Heart left ventricle (tissue), 16 donors: ENCODE measurements at regions of chr4 and their contacts with region 1.

Region 1: GRCh38 chr4:39977489-39978377 is at the start of gene PDS5A:
- DNase-seq: peak; percentile 89 to 95 (median 91)
- ATAC-seq: peak; percentile 81 to 94 (median 92)
- H3K4me3 ChIP-seq: peak within 1 kb of the TSS; percentile 69 to 100 (median 91)
- H3K27ac ChIP-seq: peak within 1 kb of the TSS; percentile 83 to 97 (median 92)
- H3K4me1 ChIP-seq: peaks cover 0 to 36% (median 15%) of the 10 kb centered on the region in 12 donors
- H3K27me3 ChIP-seq: no peaks in the 10 kb centered on the region
- CTCF ChIP-seq: peak; percentile 68 to 91 (median 87)
- POLR2A ChIP-seq: no peak
- total RNA-seq, gene PDS5A: 23.0 to 41.6 (median 30.7) TPM

Region 2: GRCh38 chr4:39458505-39459300 is 519.0 kb before region 1 on chr4 and contains the starts of genes LIAS and RPL9:
- intact Hi-C with region 1: loop called in 3 of 10 experiments (anchors 2 to 10 kb)
- DNase-seq: peak; percentile 94 to 98 (median 96)
- ATAC-seq: peak; percentile 95 to 97 (median 97)
- H3K4me3 ChIP-seq: peak within 1 kb of the TSS; percentile 67 to 93 (median 85)
- H3K27ac ChIP-seq: peak within 1 kb of the TSS; percentile 86 to 98 (median 92)
- H3K4me1 ChIP-seq: peaks cover 10 to 37% (median 27%) of the 10 kb centered on the region in 12 donors
- H3K27me3 ChIP-seq: no peaks in the 10 kb centered on the region
- CTCF ChIP-seq: no peak
- POLR2A ChIP-seq: peak; percentile 87 to 95
- total RNA-seq, gene LIAS: 15.9 to 34.4 (median 20.2) TPM
- total RNA-seq, gene RPL9: 576 to 1,701 (median 925) TPM

Region 3: DNA sequence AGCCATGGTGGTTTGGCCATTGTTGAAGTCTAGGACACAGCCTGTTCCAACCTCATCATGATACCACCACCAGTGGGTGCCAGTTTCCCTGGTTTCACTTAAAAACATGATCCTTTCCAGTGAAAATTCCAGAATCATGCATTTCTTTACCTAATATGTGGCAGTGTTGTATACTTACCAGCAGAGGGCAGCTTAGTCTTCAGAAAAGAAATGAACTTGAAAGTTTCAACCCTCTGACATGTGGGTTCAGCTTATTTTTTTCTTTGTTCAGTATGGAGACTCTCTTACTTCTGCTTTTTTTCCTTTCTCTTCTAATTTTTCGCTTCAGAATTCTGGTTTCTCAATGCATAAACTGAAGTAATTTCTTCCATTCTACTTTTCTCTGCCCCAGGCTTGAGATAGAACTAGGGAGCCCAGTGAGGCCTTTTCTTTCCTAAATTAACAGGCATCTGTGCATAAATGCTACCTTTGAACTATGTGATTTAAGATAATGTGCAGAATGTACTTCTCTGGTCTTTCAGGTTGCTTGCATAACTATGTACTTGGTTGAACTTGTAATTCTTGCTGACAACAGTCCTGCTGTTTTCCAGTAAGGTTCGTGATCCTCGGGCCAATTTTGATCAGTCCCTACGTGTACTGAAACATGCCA is 508.2 kb before region 1 on chr4:
- intact Hi-C with region 1: loop called in 9 of 10 experiments (anchors 1 to 10 kb)
- DNase-seq: no peak
- ATAC-seq: peak; percentile 47 to 84 (median 76)
- H3K4me3 ChIP-seq: peak overlapping the region in 1 of 12 donors; percentile 28
- H3K27ac ChIP-seq: peak overlapping the region in 6 of 12 donors; percentile 11 to 82 (median 22)
- H3K4me1 ChIP-seq: peaks cover 0 to 10% (median 0%) of the 10 kb centered on the region in 12 donors
- H3K27me3 ChIP-seq: no peaks in the 10 kb centered on the region
- CTCF ChIP-seq: peak; percentile 63 to 89 (median 80)
- POLR2A ChIP-seq: no peak

Region 4: DNA sequence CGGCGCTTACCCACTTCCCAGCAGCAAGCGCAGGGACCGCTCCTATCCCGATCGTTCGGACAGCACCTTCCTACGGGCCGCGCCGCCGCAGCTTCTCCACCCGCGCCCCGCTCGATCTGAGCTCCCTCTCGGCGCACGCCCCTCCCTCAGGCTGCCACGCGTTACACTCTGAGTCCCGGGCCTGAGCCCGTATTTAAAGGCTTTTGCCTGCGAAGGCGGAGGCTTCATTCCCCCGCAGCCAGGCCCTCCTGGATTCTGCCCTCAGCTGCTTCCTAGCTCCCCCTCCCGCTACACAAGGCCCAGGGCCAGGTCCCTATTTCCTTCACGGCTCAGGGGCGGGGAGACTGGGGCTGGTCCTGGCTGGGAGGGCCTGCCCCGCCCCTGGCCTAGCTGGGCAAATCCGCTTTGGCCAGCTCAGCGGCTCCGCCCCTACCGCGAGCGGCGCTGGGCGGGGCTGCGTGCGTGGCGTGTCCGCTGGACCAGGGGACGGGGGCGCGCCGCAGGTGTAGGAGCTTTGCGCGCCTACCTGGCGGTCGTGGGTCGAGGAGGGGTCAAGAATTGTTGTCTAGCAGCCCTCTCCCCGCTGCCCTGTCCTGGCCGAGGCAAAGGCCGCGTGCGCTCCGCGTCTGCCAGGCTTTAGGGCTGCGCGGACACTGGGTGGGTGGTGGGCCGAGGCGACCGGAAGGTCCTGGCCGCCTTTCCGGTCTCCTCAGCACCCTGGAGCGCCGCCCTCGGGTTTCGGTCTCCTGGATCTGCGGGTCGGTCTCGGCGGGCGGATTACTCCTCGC is 450.3 kb before region 1 on chr4 and contains the start of gene UGDH:
- intact Hi-C with region 1: loop called in 6 of 10 experiments (anchors 2 to 10 kb)
- DNase-seq: peak; percentile 96 to 99 (median 98)
- ATAC-seq: peak; percentile 98 to 99 (median 99)
- H3K4me3 ChIP-seq: peak within 1 kb of the TSS; percentile 54 to 97 (median 76)
- H3K27ac ChIP-seq: peak within 1 kb of the TSS; percentile 87 to 97 (median 95)
- H3K4me1 ChIP-seq: peaks cover 0 to 30% (median 17%) of the 10 kb centered on the region in 12 donors
- H3K27me3 ChIP-seq: no peaks in the 10 kb centered on the region
- CTCF ChIP-seq: peak in 4 of 12 donors; percentile 4 to 41 (median 28)
- POLR2A ChIP-seq: peak; percentile 62 to 94
- total RNA-seq, gene UGDH: 7.3 to 28.6 (median 16.5) TPM

Region 5: GRCh38 chr4:39638354-39639240 is 339.1 kb before region 1 on chr4 and contains the start of gene SMIM14:
- intact Hi-C with region 1: loop called in 5 of 10 experiments (anchors 2 to 5 kb)
- DNase-seq: peak; percentile 98 to 99 (median 99)
- ATAC-seq: peak; percentile 97 to 99 (median 98)
- H3K4me3 ChIP-seq: peak within 1 kb of the TSS; percentile 70 to 97 (median 78)
- H3K27ac ChIP-seq: peak within 1 kb of the TSS; percentile 87 to 99 (median 96)
- H3K4me1 ChIP-seq: peaks cover 0 to 43% (median 18%) of the 10 kb centered on the region in 12 donors
- H3K27me3 ChIP-seq: no peaks in the 10 kb centered on the region
- CTCF ChIP-seq: peak in 6 of 12 donors; percentile 14 to 33 (median 16)
- POLR2A ChIP-seq: peak; percentile 82 to 98
- total RNA-seq, gene SMIM14: 7.1 to 24.8 (median 11.9) TPM

Region 6: GRCh38 chr4:39883646-39884045 is 94.1 kb before region 1 on chr4:
- intact Hi-C with region 1: no loop called
- DNase-seq: no peak
- ATAC-seq: no peak
- H3K4me3 ChIP-seq: no peak overlapping the region
- H3K27ac ChIP-seq: no peak overlapping the region
- H3K4me1 ChIP-seq: no peaks in the 10 kb centered on the region
- H3K27me3 ChIP-seq: no peaks in the 10 kb centered on the region
- CTCF ChIP-seq: no peak
- POLR2A ChIP-seq: no peak

Region 7: DNA sequence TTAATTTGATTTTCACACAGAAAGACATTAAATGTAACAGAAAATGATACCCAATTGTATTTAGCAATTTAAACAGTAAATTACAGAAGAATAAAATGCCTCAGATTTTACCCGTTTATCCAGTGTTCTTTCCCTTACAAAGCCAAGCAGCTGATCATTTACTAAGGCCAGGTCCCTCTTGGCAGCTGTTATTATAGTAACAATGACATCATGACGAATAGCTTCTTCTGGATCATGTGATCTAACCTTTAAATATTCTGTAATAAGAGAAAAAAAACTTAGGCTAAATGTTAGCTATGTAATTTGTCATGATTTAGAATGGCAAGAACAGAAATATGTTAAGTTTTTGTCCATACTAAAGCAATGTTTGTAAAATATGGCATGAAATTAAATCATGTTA is 69.4 kb before region 1 on chr4:
- intact Hi-C with region 1: loop called in 2 of 10 experiments (anchors 10 kb)
- DNase-seq: no peak
- ATAC-seq: peak in 1 of 4 donors; percentile 59
- H3K4me3 ChIP-seq: peak overlapping the region in 3 of 12 donors; percentile 3 to 22 (median 17)
- H3K27ac ChIP-seq: peak overlapping the region in 2 of 12 donors; percentile 25 to 32
- H3K4me1 ChIP-seq: peaks cover 0 to 5% (median 0%) of the 10 kb centered on the region in 12 donors
- H3K27me3 ChIP-seq: no peaks in the 10 kb centered on the region
- CTCF ChIP-seq: no peak
- POLR2A ChIP-seq: no peak

Region 8: DNA sequence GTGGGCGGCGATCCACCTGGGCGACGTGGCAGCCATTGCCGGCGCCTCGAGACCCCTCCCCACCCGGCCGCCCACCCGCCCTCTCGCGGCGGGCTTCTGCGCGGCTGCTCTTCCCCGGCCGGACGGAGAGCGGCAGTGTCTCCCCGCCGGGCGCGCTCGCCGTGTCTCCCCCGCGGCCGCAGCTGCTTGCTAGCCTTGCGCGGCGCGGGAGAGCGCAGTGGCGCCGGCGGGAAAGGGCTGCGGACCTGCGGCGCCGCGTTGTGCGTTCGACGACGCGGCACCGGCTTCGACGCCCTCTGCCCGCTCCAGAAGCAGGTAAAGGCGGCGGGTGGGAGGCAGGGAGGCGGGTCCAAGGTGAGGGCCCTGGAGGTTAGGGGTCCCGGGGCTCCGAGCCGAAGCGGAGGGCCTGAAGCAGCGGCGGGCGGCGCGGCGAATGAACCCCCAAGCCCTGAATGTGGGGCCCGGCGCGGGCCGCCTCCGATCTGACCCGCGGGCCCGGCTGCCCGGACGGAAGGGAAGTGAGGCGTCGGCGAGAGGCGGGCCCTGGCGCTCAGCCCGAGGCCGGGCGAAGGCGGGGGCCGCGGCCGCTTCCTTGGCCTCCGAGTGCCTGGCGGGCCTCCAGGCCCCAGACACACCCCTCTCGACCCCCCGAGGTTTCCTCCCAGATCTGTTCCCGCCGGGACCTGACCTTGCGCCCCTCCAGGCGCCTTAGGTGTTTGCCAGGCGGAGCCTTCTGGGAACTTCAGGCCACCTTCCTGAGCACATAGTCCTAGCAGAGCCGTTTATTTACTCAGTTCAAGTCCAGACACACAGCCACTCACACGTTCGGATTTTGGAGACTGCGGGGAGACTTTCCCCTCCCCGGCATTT is 79.2 kb after region 1 on chr4 and contains the start of gene N4BP2:
- intact Hi-C with region 1: loop called in 7 of 10 experiments (anchors 2 to 5 kb)
- DNase-seq: peak; percentile 86 to 93 (median 87)
- ATAC-seq: peak; percentile 60 to 86 (median 84)
- H3K4me3 ChIP-seq: peak within 1 kb of the TSS; percentile 73 to 100 (median 92)
- H3K27ac ChIP-seq: peak within 1 kb of the TSS; percentile 98 to 100 (median 100)
- H3K4me1 ChIP-seq: peaks cover 0 to 27% (median 12%) of the 10 kb centered on the region in 12 donors
- H3K27me3 ChIP-seq: no peaks in the 10 kb centered on the region
- CTCF ChIP-seq: peak; percentile 40 to 95 (median 76)
- POLR2A ChIP-seq: peak; percentile 56 to 91
- total RNA-seq, gene N4BP2: 3.5 to 6.8 (median 5.0) TPM